Prostate gland (tissue), 2 donors: ENCODE measurements at regions of chr5 and their contacts with region 1.

Region 1: DNA sequence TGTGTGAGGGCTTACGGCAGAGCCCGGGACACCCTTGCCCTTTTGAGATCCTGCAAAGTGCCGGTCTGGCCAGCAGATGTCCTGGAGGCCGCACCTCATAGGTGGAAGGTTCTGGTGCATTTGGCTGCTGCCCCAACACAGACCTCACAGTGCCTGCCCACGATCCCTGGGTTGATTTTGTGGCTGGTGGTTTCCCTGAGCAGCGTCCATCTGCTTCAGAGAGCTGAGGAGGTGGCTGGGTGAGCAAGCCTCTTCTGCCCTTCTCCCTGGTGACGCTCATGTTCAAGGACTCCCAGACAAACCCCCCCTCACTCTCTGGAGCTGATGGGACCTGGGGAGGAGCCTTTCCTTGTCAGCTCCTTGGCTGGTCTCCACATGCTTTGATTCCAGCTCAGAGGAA is 18.9 kb downstream of the BNIP1 start:
- DNase-seq: no peak
- H3K4me3 ChIP-seq: no peak overlapping the region
- H3K27ac ChIP-seq: no peak overlapping the region
- H3K4me1 ChIP-seq: no peaks in the 10 kb centered on the region
- H3K27me3 ChIP-seq: no peaks in the 10 kb centered on the region
- CTCF ChIP-seq: no peak
- POLR2A ChIP-seq: no peak

Region 2: GRCh38 chr5:173278172-173278571 is 115.0 kb after region 1 on chr5:
- intact Hi-C with region 1: loop called (anchors 10 kb)
- DNase-seq: no peak
- H3K4me3 ChIP-seq: no peak overlapping the region
- H3K27ac ChIP-seq: no peak overlapping the region
- H3K4me1 ChIP-seq: no peaks in the 10 kb centered on the region
- H3K27me3 ChIP-seq: no peaks in the 10 kb centered on the region
- CTCF ChIP-seq: no peak
- POLR2A ChIP-seq: no peak